ENCODE measurements at regions of chr4 and their contacts with region 1.

Region 1: GRCh38 chr4:74133786-74134499 is 24.0 kb upstream of the MTHFD2L start:
- DNase-seq: peak; percentile 81
- H3K4me3 ChIP-seq: no peak overlapping the region
- H3K27ac ChIP-seq: no peak overlapping the region
- H3K4me1 ChIP-seq: peaks cover 0 to 5% (median 0%) of the 10 kb centered on the region in 6 donors
- H3K27me3 ChIP-seq: no peaks in the 10 kb centered on the region
- CTCF ChIP-seq: peak; percentile 47 to 81 (median 69)
- POLR2A ChIP-seq: no peak

Region 2: DNA sequence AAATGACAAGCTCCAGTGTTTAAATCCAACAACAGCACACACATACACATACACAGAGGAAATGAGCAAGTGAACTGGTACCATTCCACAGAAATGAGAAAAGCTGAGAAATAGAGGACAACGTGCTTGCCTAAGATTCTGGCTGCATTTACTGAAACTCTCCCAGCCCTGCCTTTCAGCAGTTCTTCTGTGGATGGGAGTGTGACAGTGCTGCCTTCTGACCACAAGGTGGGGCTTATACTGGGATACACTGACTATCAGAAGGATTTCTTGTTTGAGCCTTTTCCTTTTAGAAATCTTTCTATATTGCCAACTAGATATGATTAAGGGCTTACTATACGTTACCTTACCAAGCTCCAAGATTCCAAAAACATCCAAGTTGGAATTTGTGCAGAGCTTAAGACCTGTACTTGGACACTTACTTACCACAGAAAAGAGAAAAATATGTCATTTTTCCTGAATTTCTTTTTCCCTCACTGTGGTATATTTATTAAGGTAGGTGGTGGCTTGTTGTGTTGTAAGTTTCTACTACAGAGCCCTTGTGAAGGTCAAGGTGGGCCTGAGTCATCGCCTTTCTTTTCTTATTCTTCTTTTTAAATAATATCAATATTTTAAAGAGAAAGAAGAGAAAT is 404.3 kb before region 1 on chr4:
- intact Hi-C with region 1: loop called (anchors 10 kb)
- DNase-seq: no peak
- H3K4me3 ChIP-seq: peak overlapping the region in 1 of 8 donors; percentile 62
- H3K27ac ChIP-seq: peak overlapping the region in 6 of 8 donors; percentile 12 to 84 (median 76)
- H3K4me1 ChIP-seq: peaks cover 0 to 50% (median 13%) of the 10 kb centered on the region in 6 donors
- H3K27me3 ChIP-seq: no peaks in the 10 kb centered on the region
- CTCF ChIP-seq: peak; percentile 31 to 84 (median 67)
- POLR2A ChIP-seq: no peak

Region 3: GRCh38 chr4:74335341-74336021 is 201.5 kb after region 1 on chr4:
- intact Hi-C with region 1: no loop called
- DNase-seq: no peak
- H3K4me3 ChIP-seq: no peak overlapping the region
- H3K27ac ChIP-seq: peak overlapping the region in 2 of 8 donors; percentile 13 to 21
- H3K4me1 ChIP-seq: peaks cover 0 to 7% (median 0%) of the 10 kb centered on the region in 6 donors
- H3K27me3 ChIP-seq: no peaks in the 10 kb centered on the region
- CTCF ChIP-seq: no peak
- POLR2A ChIP-seq: no peak

Measured in spleen (tissue), 13 donors.